Colonic mucosa (tissue), 4 donors: ENCODE measurements at regions of chr6 and their contacts with region 1.

Region 1: DNA sequence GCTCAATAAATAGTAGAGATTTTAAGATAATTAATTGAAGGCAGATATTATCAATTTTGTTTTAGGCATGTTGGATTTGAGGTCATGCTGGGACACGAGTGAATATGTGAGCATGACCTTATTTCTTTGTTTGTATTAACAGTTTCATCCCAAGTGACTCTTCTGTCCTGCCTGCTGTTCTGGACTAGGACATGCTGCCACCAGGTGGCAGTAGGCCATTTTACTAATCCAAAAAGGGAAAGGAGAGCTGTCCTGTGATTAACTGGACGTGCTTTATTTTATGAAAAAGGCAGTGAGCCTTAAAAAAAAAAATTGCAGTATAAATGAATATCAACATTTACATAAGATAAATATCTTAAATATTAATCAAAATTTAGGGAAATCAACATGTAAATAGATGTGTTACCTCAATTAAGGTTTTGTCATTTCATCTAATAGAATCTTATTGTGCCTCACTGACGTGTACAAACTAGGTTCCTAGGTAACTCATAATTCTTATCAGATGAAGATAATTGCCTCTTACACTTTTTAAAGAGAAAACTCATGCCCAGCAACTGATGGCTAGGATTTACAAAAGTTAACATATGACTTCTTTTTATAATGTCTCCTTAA is 49.8 kb downstream of the FRK start:
- DNase-seq: peak; percentile 86
- H3K4me3 ChIP-seq: no peak overlapping the region
- H3K27ac ChIP-seq: peak overlapping the region; percentile 54
- H3K4me1 ChIP-seq: peaks cover 3% of the 10 kb centered on the region
- H3K27me3 ChIP-seq: no peaks in the 10 kb centered on the region
- CTCF ChIP-seq: peak; percentile 85

Region 2: GRCh38 chr6:115882174-115882573 is 128.7 kb before region 1 on chr6:
- intact Hi-C with region 1: no loop called
- DNase-seq: no peak
- H3K4me3 ChIP-seq: no peak overlapping the region
- H3K27ac ChIP-seq: no peak overlapping the region
- H3K4me1 ChIP-seq: no peaks in the 10 kb centered on the region
- H3K27me3 ChIP-seq: no peaks in the 10 kb centered on the region
- CTCF ChIP-seq: no peak

Region 3: GRCh38 chr6:116096979-116097816 is 86.3 kb after region 1 on chr6:
- intact Hi-C with region 1: loop called (anchors 2 kb)
- DNase-seq: no peak
- H3K4me3 ChIP-seq: no peak overlapping the region
- H3K27ac ChIP-seq: no peak overlapping the region
- H3K4me1 ChIP-seq: peaks cover 7% of the 10 kb centered on the region
- H3K27me3 ChIP-seq: no peaks in the 10 kb centered on the region
- CTCF ChIP-seq: peak; percentile 42

Region 4: DNA sequence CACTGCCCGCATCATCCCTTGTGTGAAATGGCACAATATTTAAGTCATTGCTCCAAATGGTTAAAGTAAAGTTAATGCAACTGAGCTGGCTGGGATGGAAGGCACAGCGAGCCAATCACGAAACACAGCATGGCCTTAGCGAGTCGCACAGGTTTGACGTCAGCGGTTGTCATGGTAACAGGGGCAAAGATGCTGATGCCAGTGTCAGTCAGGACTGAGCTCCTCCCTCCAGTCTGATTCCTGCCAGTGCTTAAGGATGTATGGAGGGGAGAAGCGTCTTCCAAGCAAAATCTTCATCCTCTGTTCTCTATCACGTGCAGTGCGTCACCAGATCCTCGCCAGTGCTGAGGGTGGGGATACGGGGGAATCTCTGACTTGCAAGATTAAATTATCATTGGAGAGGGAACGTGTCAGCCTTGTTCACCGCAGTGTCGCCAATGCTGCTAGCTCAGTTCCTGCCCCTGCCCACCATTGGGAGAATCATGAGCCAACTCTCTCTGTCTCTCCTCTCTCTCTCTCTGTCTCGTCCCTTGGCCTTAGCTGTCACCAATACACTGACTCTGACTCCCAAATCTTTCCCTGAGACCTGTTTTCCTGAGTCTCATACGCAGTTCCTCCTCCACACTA is 218.5 kb after region 1 on chr6:
- intact Hi-C with region 1: no loop called
- DNase-seq: peak; percentile 52
- H3K4me3 ChIP-seq: no peak overlapping the region
- H3K27ac ChIP-seq: no peak overlapping the region
- H3K4me1 ChIP-seq: no peaks in the 10 kb centered on the region
- H3K27me3 ChIP-seq: no peaks in the 10 kb centered on the region
- CTCF ChIP-seq: no peak